Activated B cell treated with CpG ODN at 0.5 μM for 24 hours (primary cell): ENCODE measurements at regions of chr12 and their contacts with region 1.

Region 1: GRCh38 chr12:53079226-53080117 is at the start of gene SPRYD3:
- DNase-seq: peak; percentile 98
- ATAC-seq: peak; percentile 98
- H3K4me3 Mint-ChIP-seq: peak within 1 kb of the TSS; percentile 92
- H3K27ac Mint-ChIP-seq: peak within 1 kb of the TSS; percentile 87
- H3K4me1 Mint-ChIP-seq: peaks cover 31% of the 10 kb centered on the region
- H3K27me3 Mint-ChIP-seq: no peaks in the 10 kb centered on the region
- CTCF ChIP-seq: no peak
- total RNA-seq, gene SPRYD3: 32.5 and 33.9 TPM in 2 replicates

Region 2: DNA sequence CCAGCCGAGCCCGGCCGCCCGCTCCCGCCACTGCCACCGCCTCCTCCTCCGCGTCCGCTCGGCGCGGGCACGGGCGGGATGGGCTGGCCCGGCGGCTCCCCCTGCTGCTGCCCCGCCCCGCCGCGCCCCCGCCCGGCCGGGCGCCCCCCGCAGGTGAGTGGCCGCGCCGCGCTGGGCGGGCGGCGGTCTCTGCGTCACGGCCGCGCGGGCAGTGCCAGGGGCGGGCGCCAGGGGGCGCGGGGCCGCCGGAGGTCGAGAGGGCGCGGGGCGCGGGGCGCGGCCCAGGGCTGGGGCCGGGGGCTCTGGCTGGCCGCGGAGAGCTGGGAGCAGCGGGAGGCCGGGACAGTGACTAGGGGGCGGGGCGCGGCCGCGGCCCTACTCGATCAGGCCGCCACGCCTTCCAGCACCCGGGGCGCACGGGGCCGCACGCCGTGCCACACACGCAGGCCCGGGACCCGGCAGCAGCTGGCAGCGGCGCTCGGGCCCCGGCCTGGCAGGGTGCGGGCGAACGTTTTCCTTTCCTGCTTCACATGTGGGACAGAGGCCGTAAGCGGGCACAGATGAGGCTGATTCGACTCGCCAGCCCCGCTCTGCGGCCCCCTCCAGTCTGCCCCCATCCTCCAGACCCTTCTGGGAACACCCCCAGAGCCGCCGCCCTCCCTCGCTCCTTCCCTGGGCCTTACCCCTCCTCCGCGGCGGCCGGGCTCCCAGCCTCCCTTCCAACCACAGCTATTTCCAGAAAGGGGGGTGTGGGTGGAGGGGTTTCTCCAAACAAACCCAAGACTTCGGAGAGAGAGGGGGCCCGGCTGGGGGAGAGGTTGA is 32.0 kb before region 1 on chr12:
- CTCF ChIA-PET with region 1: interaction called, 4 read pairs
- POLR2A ChIA-PET with region 1: interaction called, 11 read pairs
- intact Hi-C with region 1: no loop called
- DNase-seq: peak; percentile 80
- ATAC-seq: peak; percentile 86
- H3K4me3 Mint-ChIP-seq: peak overlapping the region; percentile 64
- H3K27ac Mint-ChIP-seq: peak overlapping the region; percentile 24
- H3K4me1 Mint-ChIP-seq: peaks cover 10% of the 10 kb centered on the region
- H3K27me3 Mint-ChIP-seq: no peaks in the 10 kb centered on the region
- CTCF ChIP-seq: no peak

Region 3: GRCh38 chr12:53054112-53054833 is 25.2 kb before region 1 on chr12:
- CTCF ChIA-PET with region 1: no interaction called
- POLR2A ChIA-PET with region 1: interaction called, 7 read pairs
- intact Hi-C with region 1: loop called (anchors 1 kb)
- DNase-seq: peak; percentile 86
- ATAC-seq: peak; percentile 97
- H3K4me3 Mint-ChIP-seq: peak overlapping the region; percentile 95
- H3K27ac Mint-ChIP-seq: peak overlapping the region; percentile 90
- H3K4me1 Mint-ChIP-seq: peaks cover 12% of the 10 kb centered on the region
- H3K27me3 Mint-ChIP-seq: peaks cover 6% of the 10 kb centered on the region
- CTCF ChIP-seq: no peak

Region 4: GRCh38 chr12:53267999-53268647 is 188.7 kb after region 1 on chr12 and contains the start of gene ESPL1:
- CTCF ChIA-PET with region 1: no interaction called
- POLR2A ChIA-PET with region 1: no interaction called
- intact Hi-C with region 1: no loop called
- DNase-seq: peak; percentile 84
- ATAC-seq: peak; percentile 94
- H3K4me3 Mint-ChIP-seq: peak within 1 kb of the TSS; percentile 98
- H3K27ac Mint-ChIP-seq: peak within 1 kb of the TSS; percentile 91
- H3K4me1 Mint-ChIP-seq: peaks cover 21% of the 10 kb centered on the region
- H3K27me3 Mint-ChIP-seq: no peaks in the 10 kb centered on the region
- CTCF ChIP-seq: no peak
- total RNA-seq, gene ESPL1: 6.2 and 8.2 TPM in 2 replicates